ENCODE measurements at regions of chr18 and their contacts with region 1.

Region 1: GRCh38 chr18:75644871-75645270 is 217.4 kb upstream of the SMIM21 start:
- DNase-seq: no peak
- ATAC-seq: no peak

Region 2: DNA sequence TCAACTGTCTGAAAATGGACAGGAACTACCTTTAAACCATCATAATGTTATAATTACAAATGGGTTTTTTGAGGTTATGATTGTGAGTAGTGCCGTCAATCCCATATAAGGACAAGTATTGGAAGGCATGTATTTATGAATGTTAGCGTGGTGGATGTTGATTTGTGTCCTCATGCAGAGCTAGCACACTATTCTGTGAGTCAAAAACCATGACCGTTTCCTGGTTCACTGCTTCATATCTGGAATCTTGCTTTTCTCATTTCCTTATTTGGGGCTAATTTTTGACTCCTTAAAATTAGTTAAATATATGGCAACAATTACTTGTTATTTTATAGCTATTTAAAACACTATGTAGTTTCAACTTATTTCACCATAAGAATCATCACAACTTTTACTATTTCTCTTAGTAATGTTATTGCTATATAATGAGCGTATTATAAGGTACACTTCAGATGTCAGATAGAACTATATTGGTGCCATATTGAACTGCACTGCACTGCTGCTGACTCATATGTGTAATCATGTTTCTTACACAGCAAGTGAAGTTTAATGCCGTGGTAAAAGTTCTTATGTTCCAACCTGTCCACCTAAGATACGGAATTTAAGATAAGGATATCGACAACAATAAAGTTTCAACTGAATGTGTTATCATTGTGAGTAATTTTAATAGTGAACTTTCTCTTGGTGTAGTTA is 628.7 kb before region 1 on chr18:
- intact Hi-C with region 1: no loop called
- DNase-seq: no peak
- ATAC-seq: no peak

Region 3: DNA sequence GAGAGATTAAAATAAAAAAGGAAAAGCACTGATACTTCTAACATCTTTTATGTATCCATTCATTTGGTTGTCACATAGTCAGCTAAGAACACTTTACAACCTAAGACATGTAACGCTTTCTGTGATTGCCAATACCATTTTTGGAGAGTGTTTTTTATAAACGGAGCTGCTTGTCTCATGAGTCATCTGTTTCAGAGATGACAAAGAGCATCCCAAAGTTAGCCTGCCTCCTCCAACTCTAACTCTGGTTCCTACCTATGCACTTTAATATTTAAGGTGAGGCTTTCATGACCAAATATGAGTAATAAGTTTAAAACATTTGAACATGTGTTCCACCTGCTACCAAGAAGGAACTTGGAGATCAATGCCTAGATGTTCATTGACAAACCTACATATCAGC is 42.8 kb after region 1 on chr18:
- intact Hi-C with region 1: no loop called
- DNase-seq: no peak
- ATAC-seq: no peak

Region 4: DNA sequence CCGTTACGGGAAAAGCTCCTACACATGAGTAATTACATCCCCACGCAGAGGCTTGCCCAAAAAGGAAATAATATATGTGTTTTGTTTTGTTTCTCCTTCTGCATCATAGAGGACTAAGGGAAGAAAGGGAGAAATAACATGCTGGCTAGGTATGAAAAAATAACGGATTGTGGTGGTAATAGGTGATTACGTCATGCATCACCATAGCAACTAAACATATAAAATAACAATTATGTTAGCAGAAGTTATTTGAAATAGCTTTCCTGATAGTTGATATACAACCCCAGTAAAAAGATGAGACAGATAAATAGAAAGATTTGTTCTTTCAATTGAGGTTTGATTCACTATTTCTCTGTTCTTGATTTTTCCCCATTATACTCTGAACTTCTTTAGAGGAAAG is 332.2 kb after region 1 on chr18:
- intact Hi-C with region 1: no loop called
- DNase-seq: no peak
- ATAC-seq: no peak

Region 5: GRCh38 chr18:76647322-76647721 is 1002.5 kb after region 1 on chr18:
- intact Hi-C with region 1: loop called (anchors 5 kb)
- DNase-seq: no peak
- ATAC-seq: no peak